ENCODE measurements at regions of chr12 and their contacts with region 1.

Region 1: GRCh38 chr12:51371295-51371953 is 19.8 kb downstream of the GALNT6 start:
- DNase-seq: peak; percentile 98
- ATAC-seq: peak; percentile 97
- H3K4me3 ChIP-seq: peak overlapping the region; percentile 42
- H3K27ac ChIP-seq: peak overlapping the region; percentile 95
- H3K4me1 ChIP-seq: peaks cover 42% of the 10 kb centered on the region
- H3K27me3 ChIP-seq: no peaks in the 10 kb centered on the region
- CTCF ChIP-seq: no peak

Region 2: DNA sequence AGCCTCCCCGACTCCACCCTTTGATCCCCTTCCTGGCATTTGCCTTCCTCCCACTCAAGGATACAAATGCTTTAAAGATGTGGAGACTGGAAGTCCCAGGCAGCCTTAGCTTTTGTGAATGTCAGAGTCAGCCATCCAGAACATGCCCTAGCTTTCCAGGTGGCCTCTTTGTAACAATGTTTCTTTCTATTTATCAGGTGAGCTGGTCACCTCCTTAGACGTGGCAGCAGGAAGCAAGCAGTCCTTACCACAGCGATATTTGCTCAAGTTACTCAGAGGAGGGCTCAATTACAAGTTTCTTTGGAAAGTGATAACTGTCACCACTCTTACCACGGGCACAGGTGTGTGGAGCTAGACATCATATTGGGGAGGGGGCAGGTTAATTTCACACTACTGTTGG is 14.9 kb after region 1 on chr12:
- CTCF ChIA-PET with region 1: interaction called, 5 read pairs
- POLR2A ChIA-PET with region 1: interaction called, 8 read pairs
- intact Hi-C with region 1: loop called (anchors 2 kb)
- DNase-seq: peak; percentile 90
- ATAC-seq: peak; percentile 45
- H3K4me3 ChIP-seq: peak overlapping the region; percentile 13; the same call in 1 of the 2 replicates
- H3K27ac ChIP-seq: peak overlapping the region; percentile 97
- H3K4me1 ChIP-seq: peaks cover 96% of the 10 kb centered on the region
- H3K27me3 ChIP-seq: no peaks in the 10 kb centered on the region
- CTCF ChIP-seq: no peak

Measured in PC-3 (cell line).